ENCODE measurements at regions of chr9 and their contacts with region 1.

Region 1: GRCh38 chr9:124202447-124202971 is 55.2 kb upstream of the NEK6 start:
- DNase-seq: peak; percentile 75
- ATAC-seq: peak; percentile 88
- H3K4me3 Mint-ChIP-seq: peak overlapping the region; percentile 80
- H3K27ac Mint-ChIP-seq: peak overlapping the region; percentile 99
- H3K4me1 Mint-ChIP-seq: peaks cover 96% of the 10 kb centered on the region
- H3K27me3 Mint-ChIP-seq: no peaks in the 10 kb centered on the region
- CTCF ChIP-seq: no peak

Region 2: DNA sequence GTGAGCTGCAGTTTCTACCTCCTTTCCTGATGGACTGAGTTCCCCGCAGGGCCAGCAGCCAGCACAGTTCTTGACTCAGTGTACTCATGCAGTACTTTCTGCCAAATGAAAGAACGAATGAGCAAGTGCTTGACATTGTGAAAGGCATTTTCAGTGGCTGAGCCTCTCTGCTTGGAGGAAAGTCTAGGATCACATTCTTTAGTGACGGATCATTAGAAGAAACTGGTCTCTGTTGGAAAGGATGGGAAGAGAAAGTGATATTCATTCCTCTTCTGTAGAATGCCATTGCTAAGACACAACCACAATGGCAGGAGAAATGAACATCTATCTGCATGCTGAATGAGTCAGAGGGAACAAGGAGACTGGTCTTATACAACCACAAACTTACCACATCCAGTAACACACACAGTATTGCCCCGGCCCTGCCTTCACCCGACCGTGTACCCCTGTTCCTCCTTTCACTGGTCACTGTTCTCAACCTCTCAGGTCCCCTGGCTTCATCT is 639.6 kb before region 1 on chr9:
- CTCF ChIA-PET with region 1: no interaction called
- POLR2A ChIA-PET with region 1: no interaction called
- intact Hi-C with region 1: no loop called
- DNase-seq: no peak
- ATAC-seq: no peak
- H3K4me3 Mint-ChIP-seq: no peak overlapping the region
- H3K27ac Mint-ChIP-seq: no peak overlapping the region
- H3K4me1 Mint-ChIP-seq: peaks cover 10% of the 10 kb centered on the region
- H3K27me3 Mint-ChIP-seq: no peaks in the 10 kb centered on the region
- CTCF ChIP-seq: no peak

Region 3: DNA sequence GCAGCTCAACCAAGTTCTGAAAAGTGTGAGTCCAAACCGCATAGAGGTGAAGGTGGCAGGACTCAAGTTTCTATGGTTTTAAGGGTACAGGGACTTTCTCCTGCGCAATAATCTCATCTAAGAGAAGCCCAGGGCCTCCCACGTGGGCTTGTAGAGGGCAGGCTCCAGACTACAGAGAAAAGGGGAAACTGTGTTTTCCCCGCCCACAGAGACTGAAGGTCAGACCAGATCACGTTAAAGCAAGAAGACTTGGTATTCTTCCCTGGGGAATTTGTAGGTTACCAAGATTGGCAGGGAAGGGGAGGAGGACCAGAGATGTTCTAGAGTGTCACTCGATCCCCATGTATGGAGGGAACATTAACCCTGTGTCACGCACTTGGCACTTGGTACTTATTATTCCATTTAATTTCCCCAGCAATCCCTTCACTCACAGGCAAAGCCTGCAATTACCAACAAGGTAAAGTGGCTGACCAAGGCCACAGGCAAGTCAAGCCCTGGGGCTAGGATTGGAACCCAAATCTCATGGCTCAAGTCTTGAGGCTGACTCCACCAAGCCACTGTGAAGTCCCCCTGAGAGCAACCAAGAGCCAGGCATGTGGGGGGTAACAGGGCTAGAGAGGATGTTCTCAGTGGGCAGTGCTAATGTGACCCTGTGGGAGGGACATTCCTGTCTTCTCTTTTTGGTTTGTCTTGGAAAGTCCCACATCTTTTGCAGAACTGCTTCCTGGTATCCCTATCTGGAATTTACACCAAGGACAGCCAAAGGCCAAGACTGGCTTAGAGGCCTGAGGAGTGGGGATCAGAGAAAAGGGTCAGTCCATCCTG is 37.0 kb after region 1 on chr9:
- CTCF ChIA-PET with region 1: interaction called, 3 read pairs
- POLR2A ChIA-PET with region 1: interaction called, 6 read pairs
- intact Hi-C with region 1: loop called (anchors 1 kb)
- DNase-seq: no peak
- ATAC-seq: peak; percentile 97
- H3K4me3 Mint-ChIP-seq: peak overlapping the region; percentile 48
- H3K27ac Mint-ChIP-seq: peak overlapping the region; percentile 86
- H3K4me1 Mint-ChIP-seq: peaks cover 53% of the 10 kb centered on the region
- H3K27me3 Mint-ChIP-seq: no peaks in the 10 kb centered on the region
- CTCF ChIP-seq: no peak

Region 4: GRCh38 chr9:124257844-124258606 is 55.5 kb after region 1 on chr9 and contains the start of gene NEK6:
- CTCF ChIA-PET with region 1: interaction called, 5 read pairs
- POLR2A ChIA-PET with region 1: interaction called, 10 read pairs
- intact Hi-C with region 1: loop called (anchors 1 kb)
- DNase-seq: peak; percentile 56
- ATAC-seq: peak; percentile 41
- H3K4me3 Mint-ChIP-seq: peak within 1 kb of the TSS; percentile 96
- H3K27ac Mint-ChIP-seq: peak within 1 kb of the TSS; percentile 94
- H3K4me1 Mint-ChIP-seq: peaks cover 87% of the 10 kb centered on the region
- H3K27me3 Mint-ChIP-seq: no peaks in the 10 kb centered on the region
- CTCF ChIP-seq: no peak
- total RNA-seq, gene NEK6: 110 and 115 TPM in 2 replicates

Region 5: DNA sequence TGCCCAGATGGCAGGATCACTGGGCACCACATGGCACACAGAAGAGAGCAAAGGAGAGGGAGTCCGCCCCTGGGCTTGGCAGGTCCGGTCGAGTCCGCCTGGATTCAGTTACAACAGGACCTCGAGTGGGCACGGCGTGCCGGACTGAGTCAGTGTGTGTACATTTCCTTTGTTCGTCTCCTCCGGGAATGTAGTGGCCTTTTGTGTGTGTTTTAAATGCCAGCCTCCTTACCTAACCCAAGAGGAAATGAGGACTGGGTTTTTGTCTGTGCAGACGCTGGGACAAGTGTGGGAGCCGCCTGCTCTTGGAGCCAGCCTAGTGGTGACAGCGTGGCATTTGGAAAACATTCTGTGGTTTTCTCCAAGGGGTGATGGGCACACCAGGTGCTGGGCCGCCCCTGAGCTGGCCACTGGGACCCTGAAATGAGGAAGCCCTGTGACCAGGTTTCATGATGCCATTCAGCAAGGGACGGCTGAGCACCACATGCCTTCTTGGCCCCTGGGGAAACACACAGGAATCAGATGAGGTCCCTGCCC is 64.8 kb after region 1 on chr9:
- CTCF ChIA-PET with region 1: interaction called, 8 read pairs
- POLR2A ChIA-PET with region 1: interaction called, 11 read pairs
- intact Hi-C with region 1: loop called (anchors 1 kb)
- DNase-seq: peak; percentile 43
- ATAC-seq: peak; percentile 49
- H3K4me3 Mint-ChIP-seq: peak overlapping the region; percentile 66
- H3K27ac Mint-ChIP-seq: peak overlapping the region; percentile 88
- H3K4me1 Mint-ChIP-seq: peaks cover 95% of the 10 kb centered on the region
- H3K27me3 Mint-ChIP-seq: no peaks in the 10 kb centered on the region
- CTCF ChIP-seq: no peak

Region 6: GRCh38 chr9:124513376-124513994 is 311.0 kb after region 1 on chr9:
- CTCF ChIA-PET with region 1: no interaction called
- POLR2A ChIA-PET with region 1: no interaction called
- intact Hi-C with region 1: no loop called
- DNase-seq: no peak
- ATAC-seq: no peak
- H3K4me3 Mint-ChIP-seq: no peak overlapping the region
- H3K27ac Mint-ChIP-seq: no peak overlapping the region
- H3K4me1 Mint-ChIP-seq: no peaks in the 10 kb centered on the region
- H3K27me3 Mint-ChIP-seq: peaks cover 8% of the 10 kb centered on the region
- CTCF ChIP-seq: no peak

Region 7: DNA sequence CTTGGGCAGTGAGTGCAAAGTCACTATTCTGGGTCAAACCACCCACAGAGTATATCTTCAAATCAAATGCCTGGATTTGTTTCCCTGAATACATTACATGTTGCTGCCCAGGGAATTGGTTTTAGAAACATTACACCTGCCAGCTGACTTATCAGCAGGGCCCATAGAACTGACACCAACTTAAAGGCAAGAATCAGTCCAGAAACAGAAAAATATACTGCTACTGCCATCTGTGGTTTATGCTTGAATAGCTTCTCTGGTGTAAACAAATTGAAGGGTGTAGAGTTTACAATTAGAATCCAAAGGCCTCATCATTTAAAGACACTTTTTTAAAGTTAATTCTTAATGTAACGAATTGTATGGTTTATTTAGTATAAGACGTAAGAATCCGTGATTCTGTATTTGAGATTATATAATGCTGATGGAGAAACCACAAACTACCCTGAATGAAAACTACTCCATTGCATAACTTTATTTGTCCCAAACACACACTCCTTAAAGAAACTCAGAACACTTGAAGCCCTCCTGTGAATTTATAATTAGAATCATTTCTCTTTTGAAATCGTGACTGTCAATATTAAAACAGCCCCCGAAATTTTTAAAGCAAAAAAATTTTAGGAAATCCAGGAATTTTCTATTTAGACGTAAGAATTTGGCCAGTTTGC is 562.4 kb after region 1 on chr9:
- CTCF ChIA-PET with region 1: no interaction called
- POLR2A ChIA-PET with region 1: no interaction called
- intact Hi-C with region 1: no loop called
- DNase-seq: no peak
- ATAC-seq: no peak
- H3K4me3 Mint-ChIP-seq: no peak overlapping the region
- H3K27ac Mint-ChIP-seq: no peak overlapping the region
- H3K4me1 Mint-ChIP-seq: peaks cover 19% of the 10 kb centered on the region
- H3K27me3 Mint-ChIP-seq: peaks cover 36% of the 10 kb centered on the region
- CTCF ChIP-seq: no peak

Measured in activated B cell treated with CpG ODN at 0.5 μM for 24 hours (primary cell).